Panc1 (cell line): ENCODE measurements at regions of chr20 and their contacts with region 1.

Region 1: GRCh38 chr20:258963-259362 is 1.4 kb downstream of the DEFB132 start:
- DNase-seq: no peak
- ATAC-seq: peak; percentile 69; the same call in 1 of the 2 replicates
- H3K4me3 ChIP-seq: no peak overlapping the region
- H3K27ac ChIP-seq: no peak overlapping the region
- H3K4me1 ChIP-seq: no peaks in the 10 kb centered on the region
- H3K27me3 ChIP-seq: no peaks in the 10 kb centered on the region; the same call in 1 of the 2 replicates
- CTCF ChIP-seq: peak; percentile 65

Region 2: GRCh38 chr20:219290-220115 is 39.5 kb before region 1 on chr20:
- CTCF ChIA-PET with region 1: no interaction called
- POLR2A ChIA-PET with region 1: no interaction called
- in situ Hi-C with region 1: no loop called
- intact Hi-C with region 1: loop called (anchors 5 kb)
- DNase-seq: peak; percentile 15
- ATAC-seq: peak; percentile 93
- H3K4me3 ChIP-seq: no peak overlapping the region
- H3K27ac ChIP-seq: no peak overlapping the region
- H3K4me1 ChIP-seq: no peaks in the 10 kb centered on the region
- H3K27me3 ChIP-seq: peaks cover 15% of the 10 kb centered on the region
- CTCF ChIP-seq: peak; percentile 74

Region 3: DNA sequence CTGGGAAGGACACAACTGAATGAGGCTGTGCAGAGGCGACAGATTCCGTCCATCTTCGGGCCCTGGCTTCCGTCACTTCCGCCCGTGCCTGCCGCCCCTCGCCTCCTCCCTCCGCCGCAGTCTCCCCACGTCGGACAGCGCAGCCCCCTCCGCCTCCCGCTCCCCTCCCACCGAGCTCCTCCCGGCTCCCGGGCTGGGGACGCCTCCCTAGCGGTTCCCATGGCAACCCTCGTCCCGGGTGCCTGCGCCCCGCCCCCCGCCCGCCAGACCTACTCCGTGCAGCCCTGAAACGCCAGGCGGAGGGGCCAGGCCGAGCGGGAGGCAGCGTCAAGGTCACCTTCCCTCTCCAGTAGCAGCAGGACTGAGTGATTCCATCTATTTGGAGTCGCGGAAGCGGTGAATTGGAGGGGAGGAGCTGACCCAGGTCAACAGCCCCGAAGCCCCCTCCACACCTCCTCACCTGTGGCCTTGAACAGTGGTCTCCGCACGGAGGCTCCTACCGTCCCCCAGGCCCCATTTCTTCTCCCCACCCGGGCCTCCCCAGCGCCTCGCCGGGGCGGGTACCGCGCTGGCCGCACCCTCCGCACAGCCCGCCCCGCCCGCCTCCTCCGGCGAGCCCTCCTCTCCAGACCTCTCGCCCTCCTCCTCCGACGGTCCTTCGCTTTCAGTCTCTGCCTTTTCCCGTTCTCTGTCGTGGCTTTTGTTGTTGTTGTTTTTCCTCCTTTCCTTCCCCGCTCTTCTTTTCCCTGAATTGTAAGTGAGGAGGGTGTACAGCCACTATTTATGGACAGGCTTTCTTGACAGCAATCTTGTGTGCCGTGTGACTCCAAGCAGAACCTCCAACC is 88.9 kb after region 1 on chr20:
- CTCF ChIA-PET with region 1: no interaction called
- POLR2A ChIA-PET with region 1: no interaction called
- in situ Hi-C with region 1: no loop called
- intact Hi-C with region 1: no loop called
- DNase-seq: no peak
- ATAC-seq: peak; percentile 91
- H3K4me3 ChIP-seq: peak overlapping the region; percentile 62 to 83
- H3K27ac ChIP-seq: peak overlapping the region; percentile 88
- H3K4me1 ChIP-seq: peaks cover 13% of the 10 kb centered on the region
- H3K27me3 ChIP-seq: no peaks in the 10 kb centered on the region
- CTCF ChIP-seq: no peak

Region 4: DNA sequence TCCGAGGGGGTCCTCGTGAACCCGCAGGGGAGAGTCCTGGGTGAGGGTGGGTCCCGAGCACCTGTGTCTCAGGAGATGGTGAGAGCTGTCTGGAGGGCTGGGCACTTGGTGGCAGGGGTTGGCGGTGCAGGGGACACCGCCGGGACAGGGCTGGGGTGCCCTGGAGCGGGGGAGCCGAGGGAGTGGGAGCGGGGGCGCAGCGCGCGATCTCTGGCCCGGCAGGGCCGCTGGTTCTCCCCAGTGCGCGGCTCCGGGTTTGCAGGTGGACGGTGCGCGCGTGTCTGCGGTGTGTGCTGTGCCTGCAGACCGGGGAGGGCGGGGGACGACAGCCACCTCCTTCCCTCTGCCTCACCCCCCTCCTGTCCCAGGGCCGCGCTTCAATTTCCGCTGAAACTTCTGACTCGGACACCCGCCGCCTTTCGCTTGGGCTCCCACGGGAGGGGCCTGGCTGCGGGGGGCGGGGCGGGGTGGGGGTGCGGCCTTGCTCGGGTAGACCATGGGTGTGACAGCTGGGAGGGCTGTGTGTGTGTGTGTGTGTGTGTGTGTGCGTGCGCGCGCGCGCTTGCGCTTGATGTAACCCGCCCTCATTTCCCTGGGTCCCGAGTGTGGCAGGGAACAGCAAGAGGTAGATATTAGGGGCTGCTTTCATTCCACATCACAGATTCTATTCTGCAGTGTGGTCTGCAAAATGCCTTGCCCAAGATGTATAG is 122.8 kb after region 1 on chr20:
- CTCF ChIA-PET with region 1: no interaction called
- POLR2A ChIA-PET with region 1: no interaction called
- in situ Hi-C with region 1: no loop called
- intact Hi-C with region 1: no loop called
- DNase-seq: no peak
- ATAC-seq: peak; percentile 74
- H3K4me3 ChIP-seq: peak overlapping the region; percentile 56 to 76
- H3K27ac ChIP-seq: peak overlapping the region; percentile 81
- H3K4me1 ChIP-seq: peaks cover 17% of the 10 kb centered on the region
- H3K27me3 ChIP-seq: no peaks in the 10 kb centered on the region
- CTCF ChIP-seq: no peak